ENCODE measurements at regions of chr17 and their contacts with region 1.

Region 1: DNA sequence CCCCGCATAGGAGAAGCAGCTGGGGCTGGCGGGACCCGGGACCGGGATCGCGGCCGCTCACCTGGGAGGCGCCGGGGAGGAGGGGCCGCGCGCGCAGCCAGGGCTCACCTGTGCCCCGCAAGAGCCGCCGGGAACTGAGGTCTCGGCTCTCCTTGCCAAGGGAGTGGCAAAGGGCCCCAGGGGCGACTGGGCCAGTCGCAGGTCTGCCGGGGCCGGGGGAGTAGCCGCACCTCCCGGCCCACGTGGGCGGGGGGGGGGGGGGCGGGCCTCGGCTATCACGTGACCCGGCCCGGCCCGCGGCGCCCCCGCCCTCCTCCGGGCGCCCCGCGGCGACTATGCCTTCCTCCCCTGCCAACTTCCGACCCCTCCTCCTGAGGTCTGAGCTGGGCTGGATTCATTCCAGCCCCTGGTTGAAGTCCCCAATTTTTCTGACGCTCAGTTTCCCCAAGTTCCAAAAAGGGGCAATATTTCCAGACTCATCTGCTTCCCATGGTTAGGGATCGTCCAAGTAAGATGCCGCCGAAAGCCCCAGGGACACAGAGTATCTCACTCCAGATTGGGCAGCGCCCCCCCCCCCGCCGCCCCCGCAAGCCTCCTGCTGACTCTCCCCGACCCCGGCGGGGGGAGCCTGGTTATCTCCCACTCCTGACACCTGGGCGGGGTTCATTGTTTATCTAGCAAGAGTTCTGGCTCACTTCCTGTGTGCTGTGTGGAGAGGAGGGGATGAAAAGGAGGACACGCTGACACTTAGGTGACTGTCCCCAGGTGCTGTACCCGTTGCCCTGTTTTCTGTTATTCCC is at the start of gene TMC6:
- DNase-seq: peak; percentile 80 to 91 (median 81)
- H3K4me3 ChIP-seq: peak within 1 kb of the TSS; percentile 97 to 99
- H3K4me3 Mint-ChIP-seq: peak within 1 kb of the TSS; percentile 95 to 100 (median 99)
- H3K27ac ChIP-seq: peak within 1 kb of the TSS; percentile 81
- H3K27ac Mint-ChIP-seq: peak within 1 kb of the TSS; percentile 95 to 99 (median 98)
- H3K4me1 ChIP-seq: peaks cover 64% of the 10 kb centered on the region
- H3K4me1 Mint-ChIP-seq: peaks cover 18 to 78% (median 34%) of the 10 kb centered on the region in 4 donors
- H3K27me3 ChIP-seq: no peaks in the 10 kb centered on the region
- H3K27me3 Mint-ChIP-seq: no peaks in the 10 kb centered on the region
- total RNA-seq, gene TMC6: 697 to 702 TPM

Region 2: DNA sequence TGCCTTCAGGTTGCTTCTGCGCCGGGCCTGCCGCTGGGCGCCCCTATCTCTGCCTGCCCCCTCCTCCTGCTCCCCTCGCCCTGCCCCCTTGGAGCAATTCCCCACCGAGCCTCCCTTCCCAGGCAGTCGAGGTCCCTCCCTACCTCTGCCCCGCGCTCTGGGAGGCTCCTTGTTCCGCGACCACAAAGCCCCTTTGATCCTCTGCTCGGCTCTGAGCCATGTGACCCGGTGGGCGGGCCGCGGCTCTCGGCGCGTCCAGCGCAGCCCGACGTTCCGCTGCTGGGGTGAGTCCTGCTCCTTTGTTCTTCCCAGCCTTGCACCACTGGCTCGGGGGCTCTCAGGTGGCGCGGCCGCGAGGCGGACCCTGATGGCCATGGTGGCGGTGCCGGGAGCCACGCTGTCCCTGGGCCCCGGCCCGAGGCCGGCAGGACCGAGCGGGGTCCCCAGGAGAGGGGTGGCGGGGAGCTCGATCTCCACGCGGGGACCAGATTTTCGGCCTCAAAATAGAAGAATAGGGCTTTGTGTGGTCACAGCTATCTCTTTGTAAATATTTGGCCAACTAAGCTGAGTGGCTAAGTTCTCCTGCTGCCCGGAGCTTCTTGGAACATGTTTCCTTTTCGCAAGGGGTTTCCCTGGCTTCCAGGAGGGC is 677.4 kb before region 1 on chr17:
- CTCF ChIA-PET with region 1: no interaction called
- POLR2A ChIA-PET with region 1: interaction called, 8 read pairs
- intact Hi-C with region 1: loop called (anchors 5 kb)
- DNase-seq: peak; percentile 65 to 83 (median 73)
- H3K4me3 ChIP-seq: peak overlapping the region; percentile 94 to 96
- H3K4me3 Mint-ChIP-seq: peak overlapping the region; percentile 90 to 100 (median 96)
- H3K27ac ChIP-seq: peak overlapping the region; percentile 73
- H3K27ac Mint-ChIP-seq: peak overlapping the region; percentile 81 to 100 (median 98)
- H3K4me1 ChIP-seq: peaks cover 61% of the 10 kb centered on the region
- H3K4me1 Mint-ChIP-seq: peaks cover 25 to 91% (median 45%) of the 10 kb centered on the region in 4 donors
- H3K27me3 ChIP-seq: no peaks in the 10 kb centered on the region
- H3K27me3 Mint-ChIP-seq: no peaks in the 10 kb centered on the region

Region 3: DNA sequence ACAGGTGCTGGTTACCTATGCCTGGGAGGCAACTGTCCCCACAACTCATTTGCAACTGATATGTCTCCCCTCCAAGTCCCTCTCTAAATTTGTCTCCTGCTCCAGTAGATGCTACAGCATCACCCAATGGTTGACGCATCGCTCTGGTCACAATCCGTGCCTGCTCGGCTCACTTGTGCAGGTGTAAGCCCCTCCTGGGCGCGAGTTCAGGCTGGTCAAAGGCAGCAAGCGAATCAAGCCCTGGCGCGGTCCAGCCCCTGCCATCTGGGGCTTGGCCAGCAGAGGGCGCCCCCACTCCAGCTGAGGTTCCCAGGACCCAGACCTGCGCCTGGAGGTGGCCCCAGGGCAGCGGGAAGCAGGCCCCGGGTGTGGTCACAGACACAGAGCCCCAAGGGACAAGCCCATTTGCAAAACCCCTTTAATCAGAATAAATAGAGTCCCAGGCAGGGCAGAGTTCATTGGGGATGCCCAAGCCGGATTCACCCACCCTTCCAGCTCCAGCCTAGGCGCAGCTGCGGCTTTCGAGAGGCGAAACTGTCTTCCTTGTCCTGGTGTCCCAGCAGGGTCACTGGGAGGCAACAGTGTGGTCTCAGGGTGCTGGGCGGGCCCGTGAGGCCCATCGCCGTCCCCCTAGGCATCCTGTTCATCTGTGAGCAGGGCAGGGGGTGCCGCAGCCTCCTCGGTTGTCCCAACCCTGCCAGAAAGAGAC is 16.1 kb before region 1 on chr17:
- CTCF ChIA-PET with region 1: interaction called, 121 read pairs
- POLR2A ChIA-PET with region 1: interaction called, 1,172 read pairs
- intact Hi-C with region 1: no loop called
- DNase-seq: peak; percentile 68 to 79 (median 72)
- H3K4me3 ChIP-seq: no peak overlapping the region
- H3K4me3 Mint-ChIP-seq: peak overlapping the region in 4 of 8 donors; percentile 43 to 59 (median 53)
- H3K27ac ChIP-seq: peak overlapping the region; percentile 35
- H3K27ac Mint-ChIP-seq: peak overlapping the region; percentile 81 to 96 (median 93)
- H3K4me1 ChIP-seq: peaks cover 47% of the 10 kb centered on the region
- H3K4me1 Mint-ChIP-seq: peaks cover 25 to 51% (median 36%) of the 10 kb centered on the region in 4 donors
- H3K27me3 ChIP-seq: no peaks in the 10 kb centered on the region
- H3K27me3 Mint-ChIP-seq: no peaks in the 10 kb centered on the region

Region 4: DNA sequence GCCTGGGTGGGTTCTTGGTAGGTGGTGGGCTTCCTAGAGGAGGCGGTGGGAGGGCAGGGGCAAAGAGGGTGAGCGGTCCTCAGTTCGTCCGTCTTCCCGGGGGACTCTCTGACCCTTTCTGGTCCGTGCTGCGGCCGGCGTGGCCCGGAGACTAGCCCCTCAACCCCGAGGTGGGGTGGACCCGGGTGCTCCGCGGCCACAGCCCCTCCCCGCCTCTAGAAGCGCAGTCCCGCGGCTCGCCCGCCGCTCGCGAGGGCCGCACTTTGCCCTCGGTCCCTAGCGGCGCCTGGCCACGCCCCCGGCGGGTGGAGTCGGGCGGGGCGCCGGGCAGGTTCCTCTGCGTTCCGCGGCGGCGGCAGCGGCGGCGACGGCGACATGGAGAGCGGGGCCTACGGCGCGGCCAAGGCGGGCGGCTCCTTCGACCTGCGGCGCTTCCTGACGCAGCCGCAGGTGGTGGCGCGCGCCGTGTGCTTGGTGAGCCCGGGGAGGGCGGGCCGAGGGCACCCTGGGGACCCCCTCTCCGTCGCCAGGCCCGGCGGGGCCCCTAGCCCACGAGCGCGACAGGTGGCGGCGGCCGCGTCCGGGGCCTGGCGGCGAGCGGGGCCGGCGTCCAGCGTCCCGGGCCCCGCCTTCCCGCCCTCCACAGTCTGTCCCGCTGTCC is 39.6 kb after region 1 on chr17 and contains the start of gene SYNGR2:
- CTCF ChIA-PET with region 1: no interaction called
- POLR2A ChIA-PET with region 1: interaction called, 170 read pairs
- intact Hi-C with region 1: loop called (anchors 2 kb)
- DNase-seq: peak; percentile 82 to 90 (median 88)
- H3K4me3 ChIP-seq: peak within 1 kb of the TSS; percentile 42 to 60
- H3K4me3 Mint-ChIP-seq: peak within 1 kb of the TSS; percentile 64 to 84 (median 74)
- H3K27ac ChIP-seq: peak within 1 kb of the TSS; percentile 87
- H3K27ac Mint-ChIP-seq: peak within 1 kb of the TSS; percentile 57 to 84 (median 79)
- H3K4me1 ChIP-seq: peaks cover 41% of the 10 kb centered on the region
- H3K4me1 Mint-ChIP-seq: peaks cover 17 to 44% (median 32%) of the 10 kb centered on the region in 4 donors
- H3K27me3 ChIP-seq: no peaks in the 10 kb centered on the region
- H3K27me3 Mint-ChIP-seq: no peaks in the 10 kb centered on the region
- total RNA-seq, gene SYNGR2: 60.3 to 61.6 TPM

Measured in CD4-positive, alpha-beta memory T cell (primary cell).